GM12878 (cell line): ENCODE measurements at regions of chr15 and their contacts with region 1.

Region 1: GRCh38 chr15:78979456-78980320 is 34.8 kb upstream of the CTSH start:
- DNase-seq: peak; percentile 66
- ATAC-seq: peak; percentile 45
- H3K4me3 ChIP-seq: peak overlapping the region; percentile 69
- H3K27ac ChIP-seq: peak overlapping the region; percentile 96
- H3K4me1 ChIP-seq: peaks cover 49% of the 10 kb centered on the region
- H3K27me3 ChIP-seq: no peaks in the 10 kb centered on the region
- CTCF ChIP-seq: peak; percentile 71 to 87 (median 77)
- EP300 ChIP-seq: no peak
- POLR2A ChIP-seq: no peak
- RAD21 ChIP-seq: peak; percentile 71

Region 2: DNA sequence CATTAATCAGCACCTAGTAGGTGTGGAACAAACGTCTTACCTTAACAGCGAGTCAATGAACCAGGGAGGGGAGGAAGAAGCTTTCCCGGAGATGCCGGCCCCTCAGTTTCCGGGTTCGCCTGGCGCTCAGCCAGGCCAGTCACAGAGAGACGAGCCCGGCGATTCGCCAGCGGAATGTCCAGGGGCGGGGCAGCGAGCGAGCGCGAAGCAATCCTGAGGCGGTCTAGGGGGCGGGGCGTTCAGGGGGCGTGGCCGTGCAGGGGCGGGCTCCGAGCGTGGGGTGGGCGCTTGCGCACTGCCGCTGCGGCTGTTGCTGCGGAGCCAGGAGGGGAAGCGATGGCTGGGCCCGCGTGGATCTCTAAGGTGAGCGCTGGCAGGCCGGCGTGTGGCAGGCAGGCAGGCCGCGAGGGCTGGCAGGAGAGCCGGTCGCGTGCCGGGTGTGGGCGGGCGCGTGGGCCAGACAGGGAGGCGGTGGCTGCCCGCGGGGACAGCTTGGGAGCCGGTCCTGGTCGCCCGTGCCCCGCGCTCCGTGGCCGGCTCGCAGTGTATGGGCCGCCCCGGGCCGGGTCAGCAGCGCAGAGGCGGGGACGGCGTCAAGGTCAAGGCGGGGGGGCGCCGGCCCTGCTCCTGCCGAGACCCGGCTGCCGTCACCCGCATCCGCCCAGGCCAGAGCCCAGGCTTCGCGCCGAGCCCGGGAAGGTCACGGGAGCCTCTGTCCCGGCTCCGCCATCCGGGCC is 830.5 kb before region 1 on chr15 and contains the start of gene IDH3A:
- CTCF ChIA-PET with region 1: interaction called, 3 read pairs
- POLR2A ChIA-PET with region 1: no interaction called
- RAD21 ChIA-PET with region 1: no interaction called
- SMC1A ChIA-PET with region 1: no interaction called
- in situ Hi-C with region 1: loop called (anchors 25 kb)
- intact Hi-C with region 1: no loop called
- DNase-seq: peak; percentile 80
- ATAC-seq: peak; percentile 91
- H3K4me3 ChIP-seq: peak within 1 kb of the TSS; percentile 87
- H3K27ac ChIP-seq: peak within 1 kb of the TSS; percentile 84
- H3K4me1 ChIP-seq: peaks cover 13% of the 10 kb centered on the region
- H3K27me3 ChIP-seq: no peaks in the 10 kb centered on the region
- CTCF ChIP-seq: no peak
- EP300 ChIP-seq: no peak
- POLR2A ChIP-seq: peak; percentile 94
- RAD21 ChIP-seq: no peak
- polyA plus RNA-seq, gene IDH3A: 197 to 231 TPM

Region 3: GRCh38 chr15:78909791-78910228 is 69.9 kb before region 1 on chr15:
- CTCF ChIA-PET with region 1: interaction called, 127 read pairs
- POLR2A ChIA-PET with region 1: interaction called, 3 read pairs
- RAD21 ChIA-PET with region 1: interaction called, 32 read pairs
- SMC1A ChIA-PET with region 1: interaction called, 91 read pairs
- in situ Hi-C with region 1: no loop called
- intact Hi-C with region 1: no loop called
- DNase-seq: peak; percentile 26
- ATAC-seq: peak; percentile 87
- H3K4me3 ChIP-seq: no peak overlapping the region
- H3K27ac ChIP-seq: no peak overlapping the region
- H3K4me1 ChIP-seq: peaks cover 10% of the 10 kb centered on the region; the same call in 1 of the 2 replicates
- H3K27me3 ChIP-seq: no peaks in the 10 kb centered on the region
- CTCF ChIP-seq: peak; percentile 60 to 70 (median 69); a peak in 5 of 6 replicates
- EP300 ChIP-seq: no peak
- POLR2A ChIP-seq: peak; percentile 19; the same call in 1 of the 2 replicates
- RAD21 ChIP-seq: peak; percentile 79

Region 4: GRCh38 chr15:78938658-78939488 is 40.8 kb before region 1 on chr15:
- CTCF ChIA-PET with region 1: interaction called, 43 read pairs
- POLR2A ChIA-PET with region 1: interaction called, 40 read pairs
- RAD21 ChIA-PET with region 1: interaction called, 53 read pairs
- SMC1A ChIA-PET with region 1: interaction called, 79 read pairs
- in situ Hi-C with region 1: no loop called
- intact Hi-C with region 1: loop called (anchors 1 kb)
- DNase-seq: peak; percentile 91
- ATAC-seq: peak; percentile 73
- H3K4me3 ChIP-seq: peak overlapping the region; percentile 60; the same call in 1 of the 2 replicates
- H3K27ac ChIP-seq: peak overlapping the region; percentile 91
- H3K4me1 ChIP-seq: peaks cover 28% of the 10 kb centered on the region
- H3K27me3 ChIP-seq: no peaks in the 10 kb centered on the region
- CTCF ChIP-seq: no peak
- EP300 ChIP-seq: peak; percentile 70 to 73; a peak in 3 of 4 replicates
- POLR2A ChIP-seq: no peak
- RAD21 ChIP-seq: peak; percentile 17; the same call in 1 of the 2 replicates

Region 5: DNA sequence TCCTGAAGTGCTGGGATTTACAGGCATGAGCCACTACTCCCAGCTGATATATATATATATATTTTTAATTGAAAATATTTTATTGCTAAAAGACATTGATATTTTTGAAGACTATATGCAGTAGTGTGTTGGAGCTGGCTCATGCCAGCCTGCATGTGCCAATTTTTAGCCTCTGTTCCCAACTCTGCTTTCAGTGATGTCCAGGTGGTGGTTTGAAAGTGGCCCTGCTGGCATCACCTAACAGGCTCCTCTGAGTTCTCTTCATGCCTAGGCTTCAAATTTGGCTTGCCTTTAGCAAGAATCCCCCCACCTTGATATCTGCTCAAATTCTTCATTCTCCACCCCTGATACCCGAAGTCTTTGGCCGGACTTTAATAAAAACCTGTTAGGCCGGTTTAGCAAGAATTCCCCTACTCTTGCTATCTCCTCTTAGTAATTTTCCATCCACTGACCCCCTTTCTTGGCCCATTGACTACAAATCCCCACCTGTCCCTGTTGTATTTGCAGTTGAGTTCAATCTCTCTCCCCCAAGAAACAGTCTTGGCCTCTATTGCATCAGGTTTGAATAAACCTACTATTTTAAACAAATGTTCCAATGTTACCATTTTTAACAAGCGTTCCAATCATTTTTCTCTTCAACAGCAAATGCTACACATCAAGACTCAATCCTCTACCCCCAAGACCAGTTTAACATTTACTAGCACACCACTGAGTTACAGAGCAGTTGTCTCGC is 11.0 kb before region 1 on chr15:
- CTCF ChIA-PET with region 1: interaction called, 14 read pairs
- POLR2A ChIA-PET with region 1: interaction called, 3 read pairs
- RAD21 ChIA-PET with region 1: interaction called, 6 read pairs
- SMC1A ChIA-PET with region 1: interaction called, 8 read pairs
- in situ Hi-C with region 1: no loop called
- intact Hi-C with region 1: no loop called
- DNase-seq: no peak
- ATAC-seq: no peak
- H3K4me3 ChIP-seq: no peak overlapping the region
- H3K27ac ChIP-seq: no peak overlapping the region
- H3K4me1 ChIP-seq: no peaks in the 10 kb centered on the region
- H3K27me3 ChIP-seq: no peaks in the 10 kb centered on the region
- CTCF ChIP-seq: no peak
- EP300 ChIP-seq: no peak
- POLR2A ChIP-seq: no peak
- RAD21 ChIP-seq: no peak

Region 6: DNA sequence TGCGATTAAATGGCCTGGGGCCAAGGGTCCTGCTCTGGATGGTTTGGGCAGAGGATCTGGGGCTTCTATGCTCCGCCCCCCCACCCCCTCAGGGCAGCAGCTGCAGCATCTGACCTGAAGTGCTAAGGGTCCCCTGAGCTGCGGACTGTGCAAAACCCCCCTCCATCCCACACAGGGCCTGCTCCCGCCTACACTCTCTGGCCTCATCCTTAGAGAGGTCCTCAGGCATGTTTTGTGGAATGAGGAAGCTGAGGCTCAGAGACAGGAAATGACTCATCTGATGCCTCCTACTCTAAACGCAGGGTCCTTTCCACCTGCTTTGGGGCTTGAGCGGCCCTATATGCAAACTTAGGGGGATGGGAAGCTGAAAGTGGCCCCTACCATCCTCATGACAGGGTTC is 24.6 kb after region 1 on chr15:
- CTCF ChIA-PET with region 1: interaction called, 105 read pairs
- POLR2A ChIA-PET with region 1: interaction called, 27 read pairs
- RAD21 ChIA-PET with region 1: interaction called, 75 read pairs
- SMC1A ChIA-PET with region 1: interaction called, 86 read pairs
- in situ Hi-C with region 1: no loop called
- intact Hi-C with region 1: loop called (anchors 2 kb)
- DNase-seq: peak; percentile 86
- ATAC-seq: peak; percentile 87
- H3K4me3 ChIP-seq: peak overlapping the region; percentile 39; the same call in 1 of the 2 replicates
- H3K27ac ChIP-seq: peak overlapping the region; percentile 93
- H3K4me1 ChIP-seq: peaks cover 39% of the 10 kb centered on the region
- H3K27me3 ChIP-seq: no peaks in the 10 kb centered on the region
- CTCF ChIP-seq: no peak
- EP300 ChIP-seq: peak; percentile 74 to 95
- POLR2A ChIP-seq: 0 out of 2 replicates have a peak, but pooled peaks have one; percentile 28
- RAD21 ChIP-seq: peak; percentile 21; the same call in 1 of the 2 replicates

Region 7: DNA sequence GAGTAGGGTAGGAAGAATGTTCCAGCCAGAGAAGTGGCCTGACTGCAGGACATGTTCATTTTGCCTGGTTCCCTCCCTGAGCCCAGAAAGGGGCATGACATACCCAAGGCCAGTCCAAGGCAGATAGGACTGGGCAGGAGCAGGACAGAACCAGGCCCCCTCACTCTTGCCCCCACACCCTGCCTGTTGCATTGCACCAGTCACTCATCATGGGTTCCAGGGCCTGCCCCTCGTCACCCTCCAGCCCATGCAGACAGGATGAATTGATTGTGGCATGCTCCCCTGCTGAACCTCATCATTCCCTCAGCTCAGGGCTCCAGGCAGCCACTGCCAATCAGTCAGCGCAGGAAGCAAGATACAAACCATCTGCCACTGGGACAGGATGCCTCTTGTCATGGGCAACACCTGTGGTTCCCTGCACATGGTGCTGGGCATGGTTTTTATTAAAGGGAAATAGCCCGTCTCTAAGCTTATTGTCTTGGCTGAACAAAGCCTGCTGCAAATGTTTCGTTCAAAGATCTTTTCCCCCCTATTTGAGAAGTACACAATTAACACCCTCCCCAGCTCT is 62.0 kb after region 1 on chr15:
- CTCF ChIA-PET with region 1: no interaction called
- POLR2A ChIA-PET with region 1: no interaction called
- RAD21 ChIA-PET with region 1: no interaction called
- SMC1A ChIA-PET with region 1: no interaction called
- in situ Hi-C with region 1: no loop called
- intact Hi-C with region 1: no loop called
- DNase-seq: no peak
- ATAC-seq: no peak
- H3K4me3 ChIP-seq: no peak overlapping the region
- H3K27ac ChIP-seq: no peak overlapping the region
- H3K4me1 ChIP-seq: no peaks in the 10 kb centered on the region
- H3K27me3 ChIP-seq: peaks cover 0 to under 1% of the 10 kb centered on the region in 2 experiments; a peak in 3 of 4 replicates
- CTCF ChIP-seq: no peak
- EP300 ChIP-seq: no peak
- POLR2A ChIP-seq: no peak
- RAD21 ChIP-seq: no peak

Region 8: DNA sequence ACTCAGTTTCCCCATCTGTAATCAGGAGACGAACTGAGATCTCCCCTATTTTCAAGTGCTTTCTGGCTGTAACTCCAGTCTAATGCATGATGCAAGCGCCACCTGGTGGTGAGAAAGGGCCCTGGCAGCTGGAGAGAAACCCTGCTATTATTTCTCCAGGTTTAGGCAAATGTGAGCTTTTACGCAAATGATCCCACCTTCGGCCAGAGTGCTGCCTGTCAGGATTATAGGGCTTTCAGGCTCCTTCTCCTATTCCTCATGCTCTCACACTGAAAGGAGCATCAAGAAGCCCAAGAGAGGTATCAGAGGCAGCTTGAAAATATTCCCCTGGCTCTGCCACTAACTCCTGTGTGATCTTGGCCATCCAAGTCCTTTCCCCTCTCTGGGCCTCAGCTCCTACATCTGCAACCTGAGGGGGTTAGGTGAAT is 204.8 kb after region 1 on chr15:
- CTCF ChIA-PET with region 1: interaction called, 22 read pairs
- POLR2A ChIA-PET with region 1: no interaction called
- RAD21 ChIA-PET with region 1: interaction called, 13 read pairs
- SMC1A ChIA-PET with region 1: interaction called, 4 read pairs
- in situ Hi-C with region 1: no loop called
- intact Hi-C with region 1: no loop called
- DNase-seq: peak; percentile 25
- ATAC-seq: peak; percentile 94
- H3K4me3 ChIP-seq: no peak overlapping the region
- H3K27ac ChIP-seq: no peak overlapping the region
- H3K4me1 ChIP-seq: no peaks in the 10 kb centered on the region
- H3K27me3 ChIP-seq: peaks cover 0 to 2% of the 10 kb centered on the region in 2 experiments; a peak in 1 of 4 replicates
- CTCF ChIP-seq: peak; percentile 94 to 97 (median 96)
- EP300 ChIP-seq: no peak
- POLR2A ChIP-seq: no peak
- RAD21 ChIP-seq: peak; percentile 97

Region 9: DNA sequence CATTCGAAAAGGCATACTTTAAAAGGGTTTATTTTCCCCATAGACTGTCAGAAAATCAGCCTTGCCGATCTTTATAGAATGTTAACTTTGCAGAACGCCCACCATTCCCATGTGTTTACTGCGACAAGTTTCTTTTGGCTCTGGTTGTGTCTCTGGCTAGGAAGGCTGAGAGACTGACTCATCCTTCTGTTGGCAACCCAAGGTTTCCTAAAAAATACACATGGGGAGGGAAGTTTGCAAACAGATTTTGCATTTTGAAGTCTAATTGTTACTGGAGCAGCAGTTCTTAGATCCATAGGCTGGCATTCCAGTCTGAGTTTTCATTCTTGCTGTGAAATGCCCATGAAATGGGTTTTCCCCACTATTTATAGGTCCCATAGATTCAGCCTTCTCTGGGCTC is 414.5 kb after region 1 on chr15:
- CTCF ChIA-PET with region 1: no interaction called
- POLR2A ChIA-PET with region 1: no interaction called
- RAD21 ChIA-PET with region 1: no interaction called
- SMC1A ChIA-PET with region 1: no interaction called
- in situ Hi-C with region 1: no loop called
- intact Hi-C with region 1: no loop called
- DNase-seq: no peak
- ATAC-seq: no peak
- H3K4me3 ChIP-seq: no peak overlapping the region
- H3K27ac ChIP-seq: no peak overlapping the region
- H3K4me1 ChIP-seq: no peaks in the 10 kb centered on the region
- H3K27me3 ChIP-seq: no peaks in the 10 kb centered on the region
- CTCF ChIP-seq: no peak
- EP300 ChIP-seq: no peak
- POLR2A ChIP-seq: no peak
- RAD21 ChIP-seq: no peak